Sigmoid colon (tissue), 7 donors: ENCODE measurements at regions of chr7 and their contacts with region 1.

Region 1: DNA sequence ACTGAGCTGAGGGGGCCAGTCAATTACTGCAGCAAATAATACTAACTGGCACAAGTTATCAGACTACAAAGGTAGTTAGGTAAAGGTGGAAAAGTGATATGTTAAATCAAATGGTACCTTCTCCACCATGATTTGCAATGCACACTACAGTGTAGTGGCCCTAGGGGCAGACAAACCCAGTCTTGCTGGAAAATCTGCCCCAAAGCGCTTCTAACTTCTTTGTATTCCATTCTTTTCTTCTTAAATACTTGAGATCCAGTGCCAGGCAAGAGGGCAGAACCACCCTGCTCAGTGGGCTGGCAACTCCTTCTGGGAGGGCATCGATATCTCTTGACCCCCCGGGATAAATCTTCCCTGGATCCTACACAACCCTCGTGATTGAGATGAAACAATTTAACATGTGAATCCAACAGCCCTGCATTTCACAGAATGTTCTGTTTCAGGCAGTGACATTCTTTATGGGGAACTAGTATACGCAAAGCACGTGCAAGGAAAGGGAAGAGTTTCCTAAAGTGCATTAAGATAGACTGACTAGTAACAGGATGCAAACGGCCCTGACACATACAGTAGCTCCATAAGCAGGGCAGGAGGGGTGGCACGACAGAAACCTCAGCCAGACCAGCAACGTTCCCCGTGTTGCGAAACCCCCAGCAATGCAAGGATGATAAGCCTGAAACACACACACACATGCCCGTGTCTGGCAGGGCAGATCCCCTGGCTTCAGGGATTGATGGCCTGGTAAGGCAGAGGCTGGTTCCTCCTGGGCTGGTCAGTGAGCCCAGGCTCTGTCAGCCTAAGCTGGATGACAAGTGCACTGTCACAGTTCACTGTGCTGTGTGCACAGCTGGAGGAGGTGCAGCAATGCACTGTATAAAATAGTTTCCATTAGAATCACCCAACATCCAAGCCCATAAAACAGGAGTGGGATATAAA is 89.2 kb downstream of the GSAP start:
- DNase-seq: peak; percentile 84
- H3K4me3 ChIP-seq: no peak overlapping the region
- H3K27ac ChIP-seq: peak overlapping the region; percentile 73 to 86 (median 84)
- H3K4me1 ChIP-seq: peaks cover 4 to 75% (median 55%) of the 10 kb centered on the region in 4 donors
- H3K27me3 ChIP-seq: no peaks in the 10 kb centered on the region
- CTCF ChIP-seq: no peak
- EP300 ChIP-seq: peak in 3 of 4 donors; percentile 55 to 79 (median 79)
- POLR2A ChIP-seq: no peak

Region 2: GRCh38 chr7:77199013-77199966 is 127.7 kb before region 1 on chr7 and contains the start of gene FGL2:
- intact Hi-C with region 1: loop called (anchors 2 kb)
- DNase-seq: peak; percentile 89
- H3K4me3 ChIP-seq: peak within 1 kb of the TSS; percentile 45 to 62 (median 58)
- H3K27ac ChIP-seq: peak within 1 kb of the TSS; percentile 67 to 89 (median 80)
- H3K4me1 ChIP-seq: peaks cover 0 to 38% (median 19%) of the 10 kb centered on the region in 4 donors
- H3K27me3 ChIP-seq: no peaks in the 10 kb centered on the region
- CTCF ChIP-seq: no peak
- EP300 ChIP-seq: no peak
- POLR2A ChIP-seq: peak in 1 of 2 donors; percentile 28
- total RNA-seq, gene FGL2: 64.8 to 97.4 (median 74.0) TPM

Region 3: DNA sequence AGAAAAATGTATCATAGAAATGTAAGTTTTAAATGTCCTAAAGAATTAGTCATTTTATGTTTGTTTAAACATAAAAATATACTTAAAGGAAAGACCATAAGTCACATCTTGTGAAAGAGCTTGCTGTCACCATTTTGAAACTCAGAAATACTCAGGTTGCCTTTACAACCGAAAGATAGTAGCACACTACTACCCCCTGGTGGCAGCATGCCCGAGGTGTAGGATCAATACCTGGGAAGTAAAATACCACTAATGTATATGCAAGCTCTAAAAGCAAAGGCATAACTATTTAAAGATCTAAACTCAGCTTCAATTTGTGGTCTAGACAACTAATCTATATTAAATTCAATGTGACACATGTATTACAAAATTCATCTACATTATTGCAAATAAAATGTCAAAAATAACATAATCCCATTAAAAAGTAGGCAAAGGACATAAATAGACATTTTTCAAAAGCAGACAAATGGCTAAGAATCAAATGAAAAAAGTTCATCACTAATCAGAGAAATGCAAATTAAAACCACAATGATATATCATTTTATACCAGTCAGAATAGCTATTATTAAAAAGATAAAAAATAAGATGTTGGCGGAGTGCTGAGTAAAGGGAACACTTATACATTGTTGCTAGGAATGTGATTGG is 79.6 kb before region 1 on chr7:
- intact Hi-C with region 1: loop called (anchors 5 kb)
- DNase-seq: no peak
- H3K4me3 ChIP-seq: no peak overlapping the region
- H3K27ac ChIP-seq: no peak overlapping the region
- H3K4me1 ChIP-seq: peaks cover 0 to 47% (median 40%) of the 10 kb centered on the region in 4 donors
- H3K27me3 ChIP-seq: no peaks in the 10 kb centered on the region
- CTCF ChIP-seq: peak; percentile 53 to 72 (median 67)
- EP300 ChIP-seq: no peak
- POLR2A ChIP-seq: no peak